ENCODE measurements at regions of chr11 and their contacts with region 1.

Region 1: GRCh38 chr11:88886796-88887195 is 179.0 kb downstream of the GRM5 start:
- DNase-seq: peak; percentile 51
- H3K4me3 ChIP-seq: no peak overlapping the region
- H3K27ac ChIP-seq: no peak overlapping the region
- H3K4me1 ChIP-seq: no peaks in the 10 kb centered on the region
- H3K27me3 ChIP-seq: no peaks in the 10 kb centered on the region
- CTCF ChIP-seq: peak; percentile 42 to 70

Region 2: GRCh38 chr11:87463486-87464102 is 1423.2 kb before region 1 on chr11:
- CTCF ChIA-PET with region 1: no interaction called
- dilution Hi-C with region 1: no loop called
- in situ Hi-C with region 1: no loop called
- intact Hi-C with region 1: loop called (anchors 2 kb)
- DNase-seq: peak; percentile 54
- H3K4me3 ChIP-seq: no peak overlapping the region
- H3K27ac ChIP-seq: no peak overlapping the region
- H3K4me1 ChIP-seq: no peaks in the 10 kb centered on the region
- H3K27me3 ChIP-seq: peaks cover 5% of the 10 kb centered on the region
- CTCF ChIP-seq: peak; percentile 42 to 73

Region 3: DNA sequence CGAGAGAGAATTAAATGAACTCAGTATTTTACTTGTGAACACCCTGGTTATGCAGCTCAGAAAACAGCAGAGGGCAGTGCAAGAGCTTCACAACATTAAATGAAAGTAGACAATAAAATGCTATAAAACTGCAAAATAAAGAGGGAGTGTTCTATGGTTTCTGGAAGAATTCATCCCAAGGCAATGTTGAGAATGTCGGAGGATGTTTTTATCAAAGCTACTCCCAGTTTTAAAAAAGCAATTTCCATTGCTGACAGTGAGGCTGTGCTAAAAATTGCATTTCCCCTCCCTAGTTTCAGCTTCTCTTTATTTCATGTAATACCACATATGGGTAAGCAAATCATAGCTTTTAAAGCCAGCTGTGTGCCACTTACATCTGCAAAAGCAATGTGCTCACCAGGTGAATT is 1008.4 kb before region 1 on chr11:
- CTCF ChIA-PET with region 1: no interaction called
- dilution Hi-C with region 1: no loop called
- in situ Hi-C with region 1: no loop called
- intact Hi-C with region 1: loop called (anchors 1 kb)
- DNase-seq: peak; percentile 13
- H3K4me3 ChIP-seq: no peak overlapping the region
- H3K27ac ChIP-seq: no peak overlapping the region
- H3K4me1 ChIP-seq: no peaks in the 10 kb centered on the region
- H3K27me3 ChIP-seq: no peaks in the 10 kb centered on the region
- CTCF ChIP-seq: peak; percentile 59 to 60

Region 4: DNA sequence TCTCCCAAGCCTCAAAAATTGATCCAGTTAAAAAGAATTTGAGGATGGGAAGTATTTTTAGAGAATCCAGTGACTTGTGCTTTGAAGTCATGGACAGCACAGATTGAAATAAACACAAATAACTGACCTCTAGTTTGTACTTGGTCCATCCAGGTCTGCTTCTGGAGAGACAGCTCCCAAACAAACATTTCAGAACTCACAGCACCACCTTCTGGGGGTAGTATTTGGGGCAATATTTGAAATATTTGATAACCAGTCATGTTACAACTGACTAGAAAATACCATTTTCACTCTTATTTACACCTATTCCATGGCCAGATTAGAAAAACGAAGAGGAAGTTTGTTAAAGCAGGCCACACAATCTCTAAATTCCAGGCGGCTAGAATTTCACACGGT is 605.5 kb before region 1 on chr11:
- CTCF ChIA-PET with region 1: no interaction called
- dilution Hi-C with region 1: no loop called
- in situ Hi-C with region 1: no loop called
- intact Hi-C with region 1: loop called (anchors 10 kb)
- DNase-seq: no peak
- H3K4me3 ChIP-seq: no peak overlapping the region
- H3K27ac ChIP-seq: no peak overlapping the region
- H3K4me1 ChIP-seq: peaks cover 6% of the 10 kb centered on the region
- H3K27me3 ChIP-seq: no peaks in the 10 kb centered on the region
- CTCF ChIP-seq: peak; percentile 14 to 44

Region 5: DNA sequence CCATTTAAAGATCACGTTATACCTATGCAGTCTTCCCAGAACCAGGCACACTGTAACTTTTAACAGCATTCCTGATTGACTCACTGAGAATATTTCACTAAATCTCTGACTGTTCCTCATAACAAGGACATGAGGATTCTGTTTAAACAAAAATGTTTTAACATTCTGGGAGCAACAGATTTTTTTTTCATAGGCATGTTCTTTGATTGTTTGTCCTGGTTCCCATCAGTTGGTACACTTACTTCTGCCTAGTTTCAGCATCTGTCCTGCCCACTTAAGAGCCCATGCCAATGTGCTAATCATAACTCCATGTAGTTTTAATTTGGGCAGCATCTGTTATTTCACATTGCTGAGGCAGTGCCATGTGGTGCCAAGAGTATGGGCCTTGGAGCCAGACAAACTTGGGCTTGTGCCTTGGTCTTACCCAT is 410.8 kb before region 1 on chr11:
- CTCF ChIA-PET with region 1: no interaction called
- dilution Hi-C with region 1: no loop called
- in situ Hi-C with region 1: no loop called
- intact Hi-C with region 1: no loop called
- DNase-seq: no peak
- H3K4me3 ChIP-seq: no peak overlapping the region
- H3K27ac ChIP-seq: no peak overlapping the region
- H3K4me1 ChIP-seq: peaks cover 23% of the 10 kb centered on the region
- H3K27me3 ChIP-seq: no peaks in the 10 kb centered on the region
- CTCF ChIP-seq: no peak

Region 6: DNA sequence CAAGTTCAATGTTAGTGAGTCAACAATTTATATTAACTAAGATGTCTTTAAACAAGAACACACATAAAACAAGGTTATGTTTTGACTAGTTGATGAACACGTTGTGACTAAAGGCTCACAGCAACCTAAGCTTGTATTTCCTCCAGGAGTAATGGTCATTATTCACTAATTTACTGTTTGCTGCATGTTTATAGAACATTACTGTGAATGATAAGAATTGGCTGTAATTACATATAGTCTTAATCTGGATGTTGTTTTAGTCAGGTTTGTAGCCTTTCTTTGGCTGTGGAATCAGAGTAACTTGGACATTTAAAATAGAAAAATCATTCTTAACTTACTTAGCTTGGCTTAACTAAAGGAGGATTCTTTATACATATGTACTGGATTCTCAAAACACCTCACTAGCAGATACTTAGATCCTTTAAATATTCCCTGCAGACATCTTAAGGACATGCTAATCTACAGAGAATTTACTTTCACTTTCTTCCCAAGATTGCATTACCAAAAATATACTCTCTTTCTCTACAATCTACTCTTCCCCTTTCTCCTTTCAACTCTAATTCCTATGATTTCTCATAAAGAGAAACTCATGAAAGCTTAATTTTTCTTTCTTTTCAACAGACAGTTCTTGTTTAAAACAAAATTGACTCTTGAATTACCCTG is 229.6 kb before region 1 on chr11:
- CTCF ChIA-PET with region 1: no interaction called
- dilution Hi-C with region 1: no loop called
- in situ Hi-C with region 1: no loop called
- intact Hi-C with region 1: no loop called
- DNase-seq: peak; percentile 20
- H3K4me3 ChIP-seq: no peak overlapping the region
- H3K27ac ChIP-seq: no peak overlapping the region
- H3K4me1 ChIP-seq: no peaks in the 10 kb centered on the region
- H3K27me3 ChIP-seq: no peaks in the 10 kb centered on the region
- CTCF ChIP-seq: no peak

Region 7: GRCh38 chr11:88861618-88862017 is 25.2 kb before region 1 on chr11:
- CTCF ChIA-PET with region 1: no interaction called
- dilution Hi-C with region 1: no loop called
- in situ Hi-C with region 1: no loop called
- intact Hi-C with region 1: no loop called
- DNase-seq: no peak
- H3K4me3 ChIP-seq: no peak overlapping the region
- H3K27ac ChIP-seq: no peak overlapping the region
- H3K4me1 ChIP-seq: no peaks in the 10 kb centered on the region
- H3K27me3 ChIP-seq: no peaks in the 10 kb centered on the region
- CTCF ChIP-seq: no peak

Region 8: DNA sequence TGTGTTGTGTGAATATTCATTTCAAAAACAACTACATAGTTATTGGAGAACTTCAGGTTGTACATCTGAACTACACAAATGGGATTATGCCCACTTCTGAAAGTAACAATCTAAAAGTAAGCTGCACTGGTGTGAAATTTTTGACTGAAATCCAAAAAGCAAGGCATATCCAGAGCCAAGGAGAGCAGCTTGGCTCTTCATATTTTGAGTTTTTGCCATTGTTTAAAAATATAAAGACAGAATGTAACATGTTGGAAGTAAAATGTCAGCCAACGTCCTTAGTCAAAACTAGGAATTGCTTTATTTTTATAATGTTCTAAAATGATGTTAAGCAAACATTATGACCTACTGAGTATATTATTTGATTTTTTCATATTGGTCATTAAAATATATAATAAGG is 650.1 kb after region 1 on chr11:
- CTCF ChIA-PET with region 1: no interaction called
- dilution Hi-C with region 1: no loop called
- in situ Hi-C with region 1: no loop called
- intact Hi-C with region 1: no loop called
- DNase-seq: no peak
- H3K4me3 ChIP-seq: no peak overlapping the region
- H3K27ac ChIP-seq: no peak overlapping the region
- H3K4me1 ChIP-seq: no peaks in the 10 kb centered on the region
- H3K27me3 ChIP-seq: peaks cover 2% of the 10 kb centered on the region
- CTCF ChIP-seq: no peak

Measured in mammary epithelial cell (primary cell).